ENCODE measurements at regions of chr17 and their contacts with region 1.

Region 1: GRCh38 chr17:7136266-7136877 is 21.8 kb upstream of the ASGR2 start:
- DNase-seq: peak; percentile 1
- H3K4me3 ChIP-seq: no peak overlapping the region
- H3K27me3 ChIP-seq: peaks cover 12% of the 10 kb centered on the region
- CTCF ChIP-seq: peak; percentile 91

Region 2: GRCh38 chr17:7123844-7124243 is 12.5 kb before region 1 on chr17:
- CTCF ChIA-PET with region 1: interaction called, 11 read pairs
- POLR2A ChIA-PET with region 1: no interaction called
- DNase-seq: no peak
- H3K4me3 ChIP-seq: no peak overlapping the region
- H3K27me3 ChIP-seq: peaks cover 3% of the 10 kb centered on the region
- CTCF ChIP-seq: no peak

Region 3: GRCh38 chr17:7147772-7148171 is 11.4 kb after region 1 on chr17:
- CTCF ChIA-PET with region 1: interaction called, 10 read pairs
- POLR2A ChIA-PET with region 1: no interaction called
- DNase-seq: no peak
- H3K4me3 ChIP-seq: no peak overlapping the region
- H3K27me3 ChIP-seq: no peaks in the 10 kb centered on the region; the same call in 1 of the 2 replicates
- CTCF ChIP-seq: no peak

Measured in BJ (cell line).